ENCODE measurements at regions of chr4 and their contacts with region 1.

Region 1: GRCh38 chr4:29726938-29727337 is 993.2 kb upstream of the PCDH7 start:
- DNase-seq: no peak
- ATAC-seq: no peak
- H3K4me3 ChIP-seq: no peak overlapping the region
- H3K27ac ChIP-seq: no peak overlapping the region
- H3K4me1 ChIP-seq: no peaks in the 10 kb centered on the region
- H3K27me3 ChIP-seq: no peaks in the 10 kb centered on the region
- CTCF ChIP-seq: no peak
- POLR2A ChIP-seq: no peak
- RAD21 ChIP-seq: no peak

Region 2: DNA sequence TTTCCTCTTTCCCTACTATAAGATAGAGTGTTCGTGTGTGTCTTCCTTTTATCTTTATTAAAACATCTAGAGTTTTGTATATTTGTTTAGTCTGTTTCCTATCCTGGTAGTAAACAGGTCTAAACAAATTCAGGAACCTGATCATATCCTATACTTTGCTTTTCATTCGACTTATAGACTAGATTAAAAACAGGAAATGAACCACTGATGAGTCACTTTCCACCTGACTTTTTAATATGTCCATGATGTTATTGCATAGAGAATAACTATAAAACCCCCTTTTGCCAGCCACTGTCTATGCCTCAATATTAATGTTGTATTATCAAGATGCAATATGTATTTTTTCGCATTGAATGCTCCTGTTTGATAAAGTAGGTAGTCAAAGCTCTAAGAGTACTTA is 1072.3 kb before region 1 on chr4:
- CTCF ChIA-PET with region 1: no interaction called
- POLR2A ChIA-PET with region 1: no interaction called
- dilution Hi-C with region 1: no loop called
- in situ Hi-C with region 1: no loop called
- intact Hi-C with region 1: no loop called
- DNase-seq: peak; percentile 8
- ATAC-seq: no peak
- H3K4me3 ChIP-seq: no peak overlapping the region
- H3K27ac ChIP-seq: no peak overlapping the region
- H3K4me1 ChIP-seq: no peaks in the 10 kb centered on the region
- H3K27me3 ChIP-seq: no peaks in the 10 kb centered on the region
- CTCF ChIP-seq: no peak
- POLR2A ChIP-seq: no peak
- RAD21 ChIP-seq: no peak

Region 3: GRCh38 chr4:29521281-29521680 is 205.7 kb before region 1 on chr4:
- CTCF ChIA-PET with region 1: no interaction called
- POLR2A ChIA-PET with region 1: no interaction called
- dilution Hi-C with region 1: no loop called
- in situ Hi-C with region 1: no loop called
- intact Hi-C with region 1: no loop called
- DNase-seq: no peak
- ATAC-seq: no peak
- H3K4me3 ChIP-seq: no peak overlapping the region
- H3K27ac ChIP-seq: no peak overlapping the region
- H3K4me1 ChIP-seq: no peaks in the 10 kb centered on the region
- H3K27me3 ChIP-seq: no peaks in the 10 kb centered on the region
- CTCF ChIP-seq: no peak
- POLR2A ChIP-seq: no peak
- RAD21 ChIP-seq: no peak

Region 4: GRCh38 chr4:29711226-29711625 is 15.7 kb before region 1 on chr4:
- CTCF ChIA-PET with region 1: no interaction called
- POLR2A ChIA-PET with region 1: no interaction called
- dilution Hi-C with region 1: no loop called
- in situ Hi-C with region 1: no loop called
- intact Hi-C with region 1: no loop called
- DNase-seq: peak; percentile 90
- ATAC-seq: peak; percentile 81
- H3K4me3 ChIP-seq: no peak overlapping the region
- H3K27ac ChIP-seq: peak overlapping the region; percentile 59; the same call in 1 of the 2 replicates
- H3K4me1 ChIP-seq: peaks cover 6% of the 10 kb centered on the region
- H3K27me3 ChIP-seq: no peaks in the 10 kb centered on the region
- CTCF ChIP-seq: no peak
- POLR2A ChIP-seq: no peak
- RAD21 ChIP-seq: no peak

Region 5: DNA sequence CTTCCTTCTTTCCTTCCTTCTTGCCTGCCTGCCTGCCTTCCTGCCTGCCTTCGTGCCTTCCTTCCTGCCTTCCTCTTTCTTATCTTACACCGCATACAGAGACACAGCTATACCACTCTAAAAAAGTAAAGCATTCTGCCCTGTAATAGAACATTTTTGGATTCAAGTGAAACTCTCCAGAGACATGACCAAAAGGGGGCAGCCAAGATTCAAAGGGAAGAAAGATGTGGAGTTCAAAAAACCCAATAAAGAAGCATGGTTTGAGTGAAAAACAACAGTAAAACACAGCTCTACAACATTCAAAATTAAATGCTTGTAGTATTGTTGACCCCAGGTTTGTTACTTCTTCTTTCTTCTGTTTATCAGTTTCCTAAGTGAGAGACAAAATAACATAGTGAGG is 78.3 kb after region 1 on chr4:
- CTCF ChIA-PET with region 1: interaction called, 10 read pairs
- POLR2A ChIA-PET with region 1: no interaction called
- dilution Hi-C with region 1: no loop called
- in situ Hi-C with region 1: no loop called
- intact Hi-C with region 1: no loop called
- DNase-seq: peak; percentile 2
- ATAC-seq: no peak
- H3K4me3 ChIP-seq: no peak overlapping the region
- H3K27ac ChIP-seq: no peak overlapping the region
- H3K4me1 ChIP-seq: no peaks in the 10 kb centered on the region
- H3K27me3 ChIP-seq: no peaks in the 10 kb centered on the region
- CTCF ChIP-seq: no peak
- POLR2A ChIP-seq: no peak
- RAD21 ChIP-seq: no peak

Region 6: GRCh38 chr4:29853833-29854232 is 126.9 kb after region 1 on chr4:
- CTCF ChIA-PET with region 1: no interaction called
- POLR2A ChIA-PET with region 1: no interaction called
- dilution Hi-C with region 1: no loop called
- in situ Hi-C with region 1: no loop called
- intact Hi-C with region 1: no loop called
- DNase-seq: no peak
- ATAC-seq: no peak
- H3K4me3 ChIP-seq: no peak overlapping the region
- H3K27ac ChIP-seq: no peak overlapping the region
- H3K4me1 ChIP-seq: no peaks in the 10 kb centered on the region
- H3K27me3 ChIP-seq: no peaks in the 10 kb centered on the region
- CTCF ChIP-seq: no peak
- POLR2A ChIP-seq: no peak
- RAD21 ChIP-seq: no peak

Measured in IMR-90 (cell line).